ENCODE measurements at regions of chr10 and their contacts with region 1.

Region 1: GRCh38 chr10:124971276-124971675 is 29.4 kb downstream of the ZRANB1 start:
- DNase-seq: no peak
- H3K4me3 ChIP-seq: no peak overlapping the region
- H3K27ac ChIP-seq: no peak overlapping the region
- H3K27me3 ChIP-seq: no peaks in the 10 kb centered on the region
- CTCF ChIP-seq: no peak

Region 2: DNA sequence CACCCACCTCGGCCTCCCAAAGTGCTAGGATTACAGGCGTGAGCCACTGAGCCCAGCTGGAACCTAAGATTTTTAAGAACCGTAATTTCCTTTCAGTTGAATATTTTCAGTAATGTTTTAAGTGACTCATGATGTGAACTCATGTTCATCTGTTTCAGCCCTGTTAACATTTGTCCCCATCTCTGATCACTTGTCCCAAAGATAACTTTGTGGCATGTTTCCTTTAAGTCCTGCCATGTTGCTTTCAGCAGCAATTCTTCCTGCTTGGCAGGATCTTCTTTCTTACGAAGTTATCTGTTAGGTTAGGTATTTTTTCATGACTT is 10.1 kb before region 1 on chr10:
- CTCF ChIA-PET with region 1: interaction called, 3 read pairs
- POLR2A ChIA-PET with region 1: interaction called, 10 read pairs
- DNase-seq: no peak
- H3K4me3 ChIP-seq: no peak overlapping the region
- H3K27ac ChIP-seq: no peak overlapping the region
- H3K27me3 ChIP-seq: no peaks in the 10 kb centered on the region
- CTCF ChIP-seq: no peak

Measured in AG04450 (cell line).